HEK293 (cell line): ENCODE measurements at regions of chr18 and their contacts with region 1.

Region 1: GRCh38 chr18:4106407-4107033 is 348.6 kb downstream of the DLGAP1 start:
- H3K4me3 ChIP-seq: no peak overlapping the region
- H3K27ac ChIP-seq: no peak overlapping the region
- H3K4me1 ChIP-seq: no peaks in the 10 kb centered on the region
- CTCF ChIP-seq: peak; percentile 40; the same call in 1 of the 2 replicates

Region 2: DNA sequence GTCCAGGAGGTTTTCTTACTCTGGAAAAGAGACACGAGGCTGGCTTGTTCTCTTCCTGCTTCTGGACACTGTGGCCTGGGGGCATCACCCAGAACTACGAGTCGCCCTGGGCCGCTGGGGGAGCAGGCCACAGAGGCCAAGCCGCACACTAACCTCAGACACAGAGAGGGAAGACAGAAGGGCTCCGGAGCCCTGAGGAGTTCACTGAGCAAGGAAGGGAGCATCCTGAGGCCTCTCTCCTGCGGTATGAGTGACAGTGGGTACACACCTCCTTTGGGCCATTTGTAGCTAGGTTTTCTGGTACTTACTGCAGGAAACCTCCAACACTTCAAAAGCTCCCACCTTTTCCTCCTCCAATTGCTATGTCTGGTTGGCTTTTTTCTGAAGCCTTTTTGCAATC is 145.5 kb before region 1 on chr18:
- CTCF ChIA-PET with region 1: no interaction called
- POLR2A ChIA-PET with region 1: no interaction called
- H3K4me3 ChIP-seq: no peak overlapping the region
- H3K27ac ChIP-seq: no peak overlapping the region
- H3K4me1 ChIP-seq: 0 out of 2 replicates have a peak, but pooled peaks cover 2% of the 10 kb centered on the region
- CTCF ChIP-seq: no peak

Region 3: GRCh38 chr18:4096486-4096885 is 10.0 kb before region 1 on chr18:
- CTCF ChIA-PET with region 1: interaction called, 13 read pairs
- POLR2A ChIA-PET with region 1: no interaction called
- H3K4me3 ChIP-seq: no peak overlapping the region
- H3K27ac ChIP-seq: no peak overlapping the region
- H3K4me1 ChIP-seq: peaks cover 7% of the 10 kb centered on the region; the same call in 1 of the 2 replicates
- CTCF ChIP-seq: no peak

Region 4: DNA sequence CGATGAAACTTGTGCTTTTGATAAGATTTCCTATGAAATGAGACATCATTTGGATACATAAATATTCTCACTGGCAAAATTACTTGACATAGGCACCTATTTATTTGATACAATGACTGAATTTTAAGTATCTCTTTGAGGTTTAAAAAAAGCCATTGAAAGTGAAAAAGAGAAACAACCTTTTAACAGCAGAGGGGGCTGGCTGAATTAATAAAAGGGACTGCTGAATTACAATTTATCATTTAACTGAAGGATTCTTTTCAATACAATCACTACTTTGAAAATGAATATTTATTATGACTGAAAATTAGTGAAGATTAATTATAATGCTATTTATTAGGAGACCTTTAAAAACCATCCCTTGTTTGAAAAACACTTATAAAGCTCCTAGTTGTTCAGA is 13.3 kb after region 1 on chr18:
- CTCF ChIA-PET with region 1: interaction called, 32 read pairs
- POLR2A ChIA-PET with region 1: no interaction called
- H3K4me3 ChIP-seq: no peak overlapping the region
- H3K27ac ChIP-seq: no peak overlapping the region
- H3K4me1 ChIP-seq: no peaks in the 10 kb centered on the region
- CTCF ChIP-seq: no peak

Region 5: GRCh38 chr18:5057386-5058348 is 951.1 kb after region 1 on chr18:
- CTCF ChIA-PET with region 1: interaction called, 53 read pairs
- POLR2A ChIA-PET with region 1: no interaction called
- H3K4me3 ChIP-seq: no peak overlapping the region
- H3K27ac ChIP-seq: no peak overlapping the region
- H3K4me1 ChIP-seq: no peaks in the 10 kb centered on the region
- CTCF ChIP-seq: peak; percentile 28; the same call in 1 of the 2 replicates